PC-3 (cell line): ENCODE measurements at regions of chr5 and their contacts with region 1.

Region 1: DNA sequence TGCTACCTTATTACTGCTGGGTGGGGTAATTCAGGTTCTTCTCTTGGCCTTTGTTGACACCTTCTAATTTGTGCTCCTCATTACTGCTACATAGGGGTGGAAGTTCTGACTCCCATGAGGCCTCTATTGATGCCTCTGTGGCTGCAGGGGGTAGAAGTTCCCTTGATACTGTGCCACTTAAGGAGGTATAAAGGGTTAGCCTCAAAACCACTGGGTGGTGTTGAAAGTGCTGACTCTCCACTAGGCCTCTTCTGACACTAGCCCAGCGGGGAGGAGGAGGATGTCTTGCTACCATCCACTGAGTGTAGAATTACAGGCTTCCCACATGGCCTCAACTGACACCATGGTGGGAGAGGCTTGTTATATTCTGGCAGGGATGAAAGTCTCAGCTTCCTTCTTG is 36.7 kb upstream of the CCDC112 start:
- DNase-seq: no peak
- ATAC-seq: no peak
- H3K4me3 ChIP-seq: no peak overlapping the region
- H3K27ac ChIP-seq: no peak overlapping the region
- H3K4me1 ChIP-seq: no peaks in the 10 kb centered on the region
- H3K27me3 ChIP-seq: no peaks in the 10 kb centered on the region
- CTCF ChIP-seq: no peak

Region 2: DNA sequence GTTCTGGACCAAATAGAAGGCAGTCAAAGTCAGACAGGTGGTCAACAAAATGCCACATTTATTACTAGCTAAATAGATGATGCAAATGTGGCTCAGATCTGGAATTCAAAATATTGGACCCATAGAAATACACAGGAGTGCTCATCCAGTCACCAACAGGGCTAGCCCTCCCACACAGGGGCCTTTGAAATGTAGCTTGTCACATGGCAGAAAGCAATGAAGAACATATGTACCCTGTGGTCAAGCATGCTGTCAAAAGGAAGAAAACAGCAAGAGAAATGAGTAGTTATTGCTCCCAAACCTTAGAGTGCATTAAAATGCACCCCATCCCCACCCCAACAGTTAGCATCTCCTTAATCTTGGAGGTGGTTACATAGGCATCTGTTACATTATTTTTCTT is 15.8 kb before region 1 on chr5:
- CTCF ChIA-PET with region 1: no interaction called
- POLR2A ChIA-PET with region 1: interaction called, 10 read pairs
- intact Hi-C with region 1: no loop called
- DNase-seq: no peak
- ATAC-seq: no peak
- H3K4me3 ChIP-seq: no peak overlapping the region
- H3K27ac ChIP-seq: no peak overlapping the region
- H3K4me1 ChIP-seq: no peaks in the 10 kb centered on the region
- H3K27me3 ChIP-seq: no peaks in the 10 kb centered on the region
- CTCF ChIP-seq: no peak